Activated CD8-positive, alpha-beta T cell treated with anti-CD3 and anti-CD28 coated beads for 36 hours (primary cell): ENCODE measurements at regions of chr9 and their contacts with region 1.

Region 1: GRCh38 chr9:95127249-95128176 is 190.0 kb downstream of the FANCC start:
- DNase-seq: peak; percentile 84
- ATAC-seq: peak; percentile 98
- H3K4me3 Mint-ChIP-seq: no peak overlapping the region
- H3K27ac Mint-ChIP-seq: no peak overlapping the region
- H3K4me1 Mint-ChIP-seq: no peaks in the 10 kb centered on the region
- H3K27me3 Mint-ChIP-seq: no peaks in the 10 kb centered on the region
- CTCF ChIP-seq: peak; percentile 94

Region 2: DNA sequence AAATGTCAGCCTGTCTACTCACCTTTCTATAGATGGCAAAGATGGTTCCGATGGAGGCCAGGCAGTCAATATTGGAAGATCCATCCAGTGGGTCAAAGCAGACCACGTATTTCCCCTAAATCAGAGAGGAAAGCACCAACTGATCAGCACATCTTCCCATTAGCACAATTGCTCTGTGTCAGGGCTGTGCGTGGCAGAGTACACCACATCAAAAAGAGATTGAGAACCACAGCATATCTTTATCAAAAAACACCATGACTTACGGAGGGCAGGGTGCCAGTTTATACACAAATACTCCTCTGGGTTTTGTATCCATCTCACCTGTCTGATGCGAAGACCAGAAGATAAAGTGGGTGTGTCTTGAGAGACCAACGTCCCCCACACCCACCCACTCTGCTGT is 543.0 kb before region 1 on chr9:
- CTCF ChIA-PET with region 1: no interaction called
- POLR2A ChIA-PET with region 1: no interaction called
- intact Hi-C with region 1: no loop called
- DNase-seq: peak; percentile 39
- ATAC-seq: peak; percentile 69
- H3K4me3 Mint-ChIP-seq: no peak overlapping the region
- H3K27ac Mint-ChIP-seq: no peak overlapping the region
- H3K4me1 Mint-ChIP-seq: peaks cover 22% of the 10 kb centered on the region
- H3K27me3 Mint-ChIP-seq: peaks cover 9% of the 10 kb centered on the region
- CTCF ChIP-seq: no peak

Region 3: DNA sequence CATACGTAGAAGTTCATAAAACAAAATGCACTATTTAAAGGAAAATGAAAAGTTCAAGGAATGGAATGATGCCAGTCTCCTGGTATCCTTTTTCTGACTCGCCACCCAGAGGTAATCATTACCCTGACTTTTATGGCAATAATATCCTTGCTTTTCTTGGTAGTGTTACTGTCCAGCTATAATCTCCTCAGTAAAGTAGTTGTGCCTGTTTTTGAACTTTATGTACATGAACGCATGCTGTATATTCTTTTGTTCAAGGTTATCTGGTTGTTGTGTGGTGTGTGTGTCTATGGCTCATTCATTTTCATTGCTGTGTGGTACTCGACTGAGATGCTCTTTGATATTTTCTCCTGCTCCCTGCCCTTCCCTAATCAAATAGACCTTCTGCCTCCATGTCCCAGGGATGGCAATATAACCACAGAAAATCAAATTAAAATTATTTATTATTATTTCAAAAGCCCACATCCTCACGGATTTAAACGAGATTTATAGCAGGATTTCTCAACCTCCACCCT is 459.0 kb before region 1 on chr9:
- CTCF ChIA-PET with region 1: interaction called, 52 read pairs
- POLR2A ChIA-PET with region 1: no interaction called
- intact Hi-C with region 1: no loop called
- DNase-seq: no peak
- ATAC-seq: no peak
- H3K4me3 Mint-ChIP-seq: no peak overlapping the region
- H3K27ac Mint-ChIP-seq: no peak overlapping the region
- H3K4me1 Mint-ChIP-seq: peaks cover 5% of the 10 kb centered on the region
- H3K27me3 Mint-ChIP-seq: peaks cover 2% of the 10 kb centered on the region
- CTCF ChIP-seq: no peak

Region 4: GRCh38 chr9:94783102-94783664 is 344.3 kb before region 1 on chr9:
- CTCF ChIA-PET with region 1: interaction called, 43 read pairs
- POLR2A ChIA-PET with region 1: no interaction called
- intact Hi-C with region 1: loop called (anchors 5 kb)
- DNase-seq: peak; percentile 57
- ATAC-seq: peak; percentile 30
- H3K4me3 Mint-ChIP-seq: no peak overlapping the region
- H3K27ac Mint-ChIP-seq: no peak overlapping the region
- H3K4me1 Mint-ChIP-seq: peaks cover 11% of the 10 kb centered on the region
- H3K27me3 Mint-ChIP-seq: no peaks in the 10 kb centered on the region
- CTCF ChIP-seq: peak; percentile 67

Region 5: DNA sequence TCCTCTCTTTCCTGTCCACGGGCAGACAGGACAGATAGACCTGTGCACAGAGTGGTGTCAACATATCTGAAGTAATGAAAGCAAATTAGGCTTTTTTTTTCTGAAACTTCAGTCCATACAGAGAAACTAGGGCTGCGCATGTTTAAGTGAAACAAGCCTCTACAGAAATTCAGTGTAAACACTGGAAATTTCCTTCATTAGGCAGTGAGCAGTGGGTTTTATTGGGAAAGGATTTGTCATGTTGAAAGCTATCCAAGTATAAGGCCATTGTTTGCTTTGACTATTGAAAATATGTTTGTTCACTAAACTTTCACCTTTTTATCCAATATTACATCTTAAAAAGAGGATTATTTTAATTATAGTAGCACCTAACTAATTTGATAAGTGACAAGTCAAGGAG is 239.8 kb before region 1 on chr9:
- CTCF ChIA-PET with region 1: no interaction called
- POLR2A ChIA-PET with region 1: no interaction called
- intact Hi-C with region 1: no loop called
- DNase-seq: no peak
- ATAC-seq: no peak
- H3K4me3 Mint-ChIP-seq: no peak overlapping the region
- H3K27ac Mint-ChIP-seq: no peak overlapping the region
- H3K4me1 Mint-ChIP-seq: no peaks in the 10 kb centered on the region
- H3K27me3 Mint-ChIP-seq: no peaks in the 10 kb centered on the region
- CTCF ChIP-seq: no peak

Region 6: DNA sequence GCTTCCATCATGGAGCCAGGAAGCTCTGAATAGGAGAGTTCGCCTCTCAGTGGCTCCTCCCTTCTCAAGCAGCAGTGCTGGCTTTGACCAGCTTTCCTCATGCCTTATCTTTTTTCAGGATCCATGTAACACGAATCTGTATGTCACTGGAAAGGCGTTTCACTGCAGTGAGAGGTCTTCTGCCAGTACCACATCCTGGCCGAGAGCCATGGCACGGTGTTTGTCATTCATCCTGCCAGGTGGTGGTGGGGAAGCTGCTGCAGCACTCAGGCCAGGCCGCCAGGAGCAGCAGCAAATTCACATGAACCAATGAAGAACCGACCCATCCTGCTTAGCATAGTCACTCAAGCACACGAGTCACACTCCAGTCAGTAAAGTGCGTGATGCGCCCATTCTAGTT is 11.0 kb after region 1 on chr9:
- CTCF ChIA-PET with region 1: interaction called, 18 read pairs
- POLR2A ChIA-PET with region 1: no interaction called
- intact Hi-C with region 1: no loop called
- DNase-seq: no peak
- ATAC-seq: no peak
- H3K4me3 Mint-ChIP-seq: no peak overlapping the region
- H3K27ac Mint-ChIP-seq: no peak overlapping the region
- H3K4me1 Mint-ChIP-seq: no peaks in the 10 kb centered on the region
- H3K27me3 Mint-ChIP-seq: no peaks in the 10 kb centered on the region
- CTCF ChIP-seq: no peak

Region 7: GRCh38 chr9:95157481-95158151 is 30.1 kb after region 1 on chr9:
- CTCF ChIA-PET with region 1: interaction called, 13 read pairs
- POLR2A ChIA-PET with region 1: no interaction called
- intact Hi-C with region 1: no loop called
- DNase-seq: no peak
- ATAC-seq: no peak
- H3K4me3 Mint-ChIP-seq: no peak overlapping the region
- H3K27ac Mint-ChIP-seq: no peak overlapping the region
- H3K4me1 Mint-ChIP-seq: peaks cover 11% of the 10 kb centered on the region
- H3K27me3 Mint-ChIP-seq: no peaks in the 10 kb centered on the region
- CTCF ChIP-seq: no peak